GM13976 (cell line): ENCODE measurements at regions of chr16 and their contacts with region 1.

Region 1: DNA sequence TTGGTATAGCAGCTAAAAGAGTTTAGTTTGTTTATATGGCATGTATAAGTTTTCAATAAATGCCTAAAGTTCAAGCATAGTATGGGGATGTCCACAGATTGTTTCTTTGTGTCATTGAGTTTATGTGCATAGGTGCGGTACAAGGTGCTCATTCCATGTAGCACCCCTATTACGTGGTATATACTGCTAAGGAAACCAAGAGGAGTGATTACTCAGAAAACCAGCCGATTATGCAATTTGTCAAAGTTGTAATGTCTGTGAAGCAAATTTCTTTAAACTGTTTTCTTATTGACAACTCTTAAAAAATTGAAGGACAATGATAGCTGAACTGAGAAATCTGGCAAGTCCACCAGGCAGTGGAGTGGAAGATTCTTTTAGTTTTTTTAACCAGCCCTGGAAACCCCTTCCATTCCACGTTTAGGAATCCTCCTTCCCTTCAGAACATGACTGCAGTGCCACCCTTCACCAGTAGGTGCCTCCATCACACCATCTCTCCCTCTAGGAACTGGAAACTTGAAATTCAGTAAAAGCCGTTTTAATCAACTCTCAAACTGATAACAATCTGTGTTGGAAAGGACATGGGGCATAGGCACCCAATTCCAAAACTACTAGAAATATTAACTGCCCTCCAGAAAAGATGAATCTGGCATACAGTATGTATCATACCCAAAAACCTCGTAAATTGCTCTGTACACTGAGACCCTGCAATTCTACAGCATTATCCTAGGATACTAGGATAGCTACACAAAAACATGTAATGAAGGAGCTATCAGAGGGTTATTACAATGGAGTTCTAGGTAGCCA is 43.5 kb downstream of the REXO5 start:
- DNase-seq: peak; percentile 36
- CTCF ChIP-seq: peak; percentile 89

Region 2: DNA sequence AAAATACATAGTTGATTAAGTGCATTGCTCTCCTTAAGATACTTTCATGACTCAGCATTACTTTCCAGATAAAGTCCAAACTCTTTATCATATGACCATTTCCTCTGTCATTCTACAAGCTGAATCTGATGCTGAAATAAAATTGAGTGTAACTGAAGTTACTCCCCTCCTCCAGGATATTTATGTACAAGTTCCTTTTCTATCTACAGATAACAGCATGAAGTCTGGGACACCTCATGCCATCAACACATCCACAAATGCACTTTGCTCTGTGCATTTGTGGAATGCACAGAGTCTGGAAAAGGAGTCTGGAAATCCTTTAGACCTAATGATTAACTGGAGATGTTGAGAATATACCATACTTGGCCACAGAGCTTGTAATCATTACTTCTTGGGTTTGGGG is 334.1 kb before region 1 on chr16:
- in situ Hi-C with region 1: no loop called
- DNase-seq: no peak
- CTCF ChIP-seq: no peak

Region 3: DNA sequence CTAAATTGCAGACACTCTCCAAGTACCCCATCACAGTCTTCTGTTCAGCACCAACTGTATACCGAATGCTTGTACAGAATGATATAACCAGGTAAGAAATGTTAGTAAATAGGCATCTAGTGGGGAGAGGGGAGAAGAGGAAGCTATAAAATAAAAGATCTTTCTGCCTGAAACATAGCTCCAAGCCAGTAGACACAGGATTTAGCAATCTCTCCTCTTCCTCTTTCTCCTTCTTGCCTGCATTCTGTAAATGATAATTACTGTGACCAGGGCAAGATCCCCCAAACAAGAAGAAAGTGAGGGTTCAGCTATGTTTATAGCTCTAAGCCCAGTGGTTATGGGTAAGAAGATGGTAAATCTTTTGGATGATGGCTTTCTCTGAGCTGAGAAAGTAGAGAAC is 68.1 kb before region 1 on chr16:
- in situ Hi-C with region 1: no loop called
- DNase-seq: no peak
- CTCF ChIP-seq: no peak

Region 4: GRCh38 chr16:20791923-20792612 is 57.7 kb before region 1 on chr16:
- in situ Hi-C with region 1: no loop called
- DNase-seq: no peak
- CTCF ChIP-seq: no peak

Region 5: GRCh38 chr16:21083729-21084268 is 234.0 kb after region 1 on chr16:
- in situ Hi-C with region 1: loop called (anchors 5 kb)
- DNase-seq: peak; percentile 56
- CTCF ChIP-seq: peak; percentile 86

Region 6: DNA sequence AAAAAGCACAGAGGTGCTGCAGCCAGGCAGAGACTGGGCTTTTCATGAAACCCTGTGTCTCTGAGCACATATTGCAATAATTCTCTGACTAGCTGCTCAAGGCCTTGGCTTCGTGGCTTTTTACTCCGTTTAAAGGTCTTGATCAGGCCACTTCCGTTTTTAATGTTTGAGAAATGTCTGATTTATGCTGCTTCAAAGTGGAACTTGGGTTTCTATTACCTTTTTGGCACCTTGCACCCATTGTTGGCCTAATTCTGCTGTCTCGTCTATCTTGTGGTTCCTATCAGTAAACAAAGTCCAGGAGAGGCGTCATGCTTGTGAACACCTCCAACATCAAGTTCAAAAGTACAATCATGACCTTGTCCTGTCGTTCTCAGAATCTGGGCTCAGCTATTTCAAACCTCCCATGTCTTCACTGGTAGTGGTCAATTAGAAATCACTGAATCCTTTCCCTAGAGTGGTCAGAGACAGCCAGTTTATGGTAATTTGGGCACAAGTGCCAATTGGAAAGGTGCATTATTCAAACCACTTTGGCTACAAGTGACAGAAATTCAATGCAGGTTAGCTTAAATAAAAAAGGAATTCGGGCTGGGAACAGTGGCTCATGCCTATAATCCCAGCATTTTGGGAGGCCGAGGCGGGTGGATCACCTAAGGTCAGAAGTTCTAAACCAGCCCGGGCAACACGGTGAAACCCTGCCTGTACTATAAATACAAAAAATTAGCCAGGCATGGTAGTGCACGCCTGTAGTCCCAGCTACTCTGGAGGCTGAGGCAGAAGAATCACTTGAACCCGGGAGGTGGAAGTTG is 716.3 kb after region 1 on chr16:
- in situ Hi-C with region 1: no loop called
- DNase-seq: no peak
- CTCF ChIP-seq: no peak